ENCODE measurements at regions of chr11 and their contacts with region 1.

Region 1: GRCh38 chr11:12235947-12236743 is 125.8 kb downstream of the MICAL2 start:
- DNase-seq: peak in 7 of 10 donors; percentile 6 to 79 (median 73)
- ATAC-seq: peak; percentile 86 to 87
- H3K4me3 Mint-ChIP-seq: peak overlapping the region; percentile 5 to 82 (median 70)
- H3K27ac Mint-ChIP-seq: peak overlapping the region; percentile 20 to 93 (median 86)
- H3K4me1 Mint-ChIP-seq: peaks cover 13 to 23% (median 22%) of the 10 kb centered on the region in 4 donors
- H3K27me3 Mint-ChIP-seq: no peaks in the 10 kb centered on the region

Region 2: DNA sequence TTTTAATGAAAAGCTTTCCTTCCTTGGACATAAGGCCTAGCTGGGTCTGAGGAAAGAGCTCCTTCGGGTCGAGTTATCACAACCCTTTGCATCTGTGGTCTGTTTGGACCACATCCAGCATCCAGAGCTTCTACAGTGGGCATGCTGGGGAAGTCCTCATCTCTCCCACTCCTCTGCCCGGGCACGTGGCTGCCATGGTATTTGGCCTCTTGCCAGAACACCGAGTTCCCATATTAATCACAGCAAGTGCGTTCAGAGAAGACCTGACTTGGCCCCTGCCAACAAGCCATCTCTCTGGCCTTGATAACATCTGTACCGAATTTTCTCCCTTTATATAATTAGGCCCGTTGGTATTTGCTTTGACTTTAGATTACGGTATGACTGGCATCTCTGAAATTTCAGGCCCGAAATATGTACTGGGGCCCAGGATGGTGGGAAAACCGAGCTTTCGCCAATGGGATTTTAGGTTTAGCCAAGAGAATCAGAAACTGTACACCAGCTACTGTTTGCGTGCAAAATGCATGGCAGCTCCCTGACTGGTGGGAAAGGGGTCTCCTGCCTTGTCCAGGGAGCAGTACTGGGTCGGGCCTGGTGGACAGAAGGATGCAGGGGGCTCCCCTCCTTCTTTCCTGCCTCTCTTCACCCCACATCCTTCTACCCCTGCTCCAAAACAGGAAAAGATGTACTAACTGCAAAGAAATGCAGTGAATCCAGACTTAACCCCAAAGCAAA is 35.7 kb before region 1 on chr11:
- POLR2A ChIA-PET with region 1: interaction called, 11 read pairs
- DNase-seq: no peak
- ATAC-seq: no peak
- H3K4me3 Mint-ChIP-seq: no peak overlapping the region
- H3K27ac Mint-ChIP-seq: peak overlapping the region in 6 of 10 donors; percentile 2 to 91 (median 62)
- H3K4me1 Mint-ChIP-seq: peaks cover 30 to 60% (median 47%) of the 10 kb centered on the region in 4 donors
- H3K27me3 Mint-ChIP-seq: no peaks in the 10 kb centered on the region

Region 3: DNA sequence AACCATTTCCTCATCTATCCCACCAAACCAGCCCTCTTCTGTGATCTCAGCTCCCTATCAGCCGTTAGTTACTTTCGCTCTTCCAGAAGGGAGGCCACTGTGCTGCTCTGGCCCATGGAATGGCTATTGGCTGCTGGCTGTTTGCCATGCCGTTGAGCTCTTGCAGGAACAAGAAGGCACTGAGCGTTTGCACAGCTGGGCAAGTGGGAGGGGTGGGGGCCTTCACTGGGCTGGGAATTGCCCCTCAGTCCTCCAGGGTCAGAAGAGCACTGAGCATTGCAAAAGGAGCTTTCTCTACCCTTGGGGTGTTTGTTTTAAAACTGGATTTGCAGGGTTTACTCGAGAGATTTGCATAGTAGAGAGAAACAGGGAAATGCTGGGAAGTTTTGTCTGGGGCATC is 12.2 kb after region 1 on chr11:
- POLR2A ChIA-PET with region 1: no interaction called
- DNase-seq: no peak
- ATAC-seq: no peak
- H3K4me3 Mint-ChIP-seq: no peak overlapping the region
- H3K27ac Mint-ChIP-seq: peak overlapping the region in 1 of 10 donors; percentile 24
- H3K4me1 Mint-ChIP-seq: peaks cover 1 to 6% (median 2%) of the 10 kb centered on the region in 4 donors
- H3K27me3 Mint-ChIP-seq: no peaks in the 10 kb centered on the region